ENCODE measurements at regions of chr17 and their contacts with region 1.

Region 1: DNA sequence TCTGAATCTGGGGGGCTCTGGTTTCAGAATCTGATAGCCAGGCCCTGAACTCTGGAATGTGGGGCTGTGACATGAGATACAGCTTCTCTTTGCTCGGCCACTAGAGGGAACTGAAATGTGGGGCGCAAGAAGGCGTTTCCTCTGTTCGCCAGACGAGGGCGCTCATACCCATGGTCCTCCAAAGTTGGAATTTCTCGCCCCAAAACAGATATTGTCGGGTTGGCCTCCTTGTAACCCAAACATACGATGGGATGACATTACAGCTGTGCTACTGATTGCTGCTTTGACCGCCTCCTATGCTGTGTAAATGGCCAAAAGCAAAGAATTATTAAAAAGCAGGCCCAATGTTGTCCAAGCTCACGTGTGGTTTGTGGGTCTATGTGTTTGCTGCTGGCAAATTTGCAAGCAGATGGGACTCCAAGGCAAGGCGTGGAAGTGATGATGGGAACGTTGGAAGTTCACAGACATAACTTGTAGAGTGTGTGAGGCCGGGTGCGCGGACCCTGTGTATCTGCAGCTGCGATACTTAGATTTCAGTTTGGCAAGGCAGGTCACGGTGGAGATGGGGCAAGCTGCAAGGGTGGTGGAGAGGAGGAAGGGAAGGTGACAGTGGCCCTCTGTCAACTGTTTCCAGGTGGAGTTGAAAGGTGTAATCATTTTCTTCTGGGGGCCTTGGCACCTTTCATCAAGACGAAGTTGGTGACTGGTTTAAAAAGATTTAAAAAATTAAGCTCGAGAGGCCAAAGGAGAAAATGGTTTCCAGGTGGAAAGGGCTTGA is 13.0 kb upstream of the MSI2 start:
- DNase-seq: peak; percentile 81 to 89 (median 85)
- H3K4me3 ChIP-seq: no peak overlapping the region
- H3K27ac ChIP-seq: no peak overlapping the region
- H3K4me1 ChIP-seq: peaks cover 3 to 29% (median 26%) of the 10 kb centered on the region in 4 experiments
- H3K27me3 ChIP-seq: no peaks in the 10 kb centered on the region

Region 2: GRCh38 chr17:57178839-57179238 is 64.5 kb before region 1 on chr17:
- CTCF ChIA-PET with region 1: no interaction called
- POLR2A ChIA-PET with region 1: no interaction called
- DNase-seq: no peak
- H3K4me3 ChIP-seq: no peak overlapping the region
- H3K27ac ChIP-seq: no peak overlapping the region
- H3K4me1 ChIP-seq: no peaks in the 10 kb centered on the region
- H3K27me3 ChIP-seq: no peaks in the 10 kb centered on the region

Region 3: GRCh38 chr17:57221366-57222350 is 21.7 kb before region 1 on chr17:
- CTCF ChIA-PET with region 1: no interaction called
- POLR2A ChIA-PET with region 1: no interaction called
- DNase-seq: peak in 2 of 3 donors; percentile 17 to 36
- H3K4me3 ChIP-seq: no peak overlapping the region
- H3K27ac ChIP-seq: no peak overlapping the region
- H3K4me1 ChIP-seq: peaks cover 0 to 4% (median 4%) of the 10 kb centered on the region in 4 experiments
- H3K27me3 ChIP-seq: no peaks in the 10 kb centered on the region

Region 4: GRCh38 chr17:57255776-57256681 is 12.7 kb after region 1 on chr17 and contains the start of gene MSI2:
- CTCF ChIA-PET with region 1: interaction called, 34 read pairs
- POLR2A ChIA-PET with region 1: no interaction called
- DNase-seq: peak; percentile 94 to 97 (median 97)
- H3K4me3 ChIP-seq: peak within 1 kb of the TSS; percentile 74 to 99 (median 91)
- H3K27ac ChIP-seq: peak within 1 kb of the TSS; percentile 72 to 86
- H3K4me1 ChIP-seq: peaks cover 22 to 47% (median 32%) of the 10 kb centered on the region in 4 experiments
- H3K27me3 ChIP-seq: no peaks in the 10 kb centered on the region

Region 5: GRCh38 chr17:57261084-57261461 is 17.7 kb after region 1 on chr17:
- CTCF ChIA-PET with region 1: interaction called, 16 read pairs
- POLR2A ChIA-PET with region 1: no interaction called
- DNase-seq: peak in 2 of 3 donors; percentile 35 to 41
- H3K4me3 ChIP-seq: peak overlapping the region in 6 of 7 experiments; percentile 81 to 99 (median 94)
- H3K27ac ChIP-seq: peak overlapping the region; percentile 9 to 86
- H3K4me1 ChIP-seq: peaks cover 44 to 76% (median 68%) of the 10 kb centered on the region in 4 experiments
- H3K27me3 ChIP-seq: no peaks in the 10 kb centered on the region

Region 6: DNA sequence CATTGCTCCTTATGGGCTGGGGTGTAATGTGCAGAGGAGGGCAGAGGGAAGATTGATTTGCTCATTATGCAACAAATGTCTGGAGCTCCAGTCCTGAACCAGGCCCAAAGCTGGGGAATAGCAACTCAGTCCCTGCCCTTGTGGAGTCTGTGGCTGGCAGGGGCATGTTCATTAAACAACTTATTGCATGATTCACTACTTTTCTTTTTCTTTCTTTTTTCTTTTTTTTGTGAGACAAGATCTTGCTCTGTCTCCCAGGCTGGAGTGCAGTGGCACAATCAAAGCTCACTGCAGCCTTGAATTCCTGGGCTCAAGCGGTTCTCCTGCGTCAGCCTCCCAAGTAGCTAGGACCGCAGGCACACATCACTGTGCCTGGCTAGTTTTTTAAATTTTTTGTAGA is 36.1 kb after region 1 on chr17:
- CTCF ChIA-PET with region 1: interaction called, 12 read pairs
- POLR2A ChIA-PET with region 1: no interaction called
- DNase-seq: no peak
- H3K4me3 ChIP-seq: no peak overlapping the region
- H3K27ac ChIP-seq: peak overlapping the region in 1 of 2 experiments; percentile 37
- H3K4me1 ChIP-seq: peaks cover 3 to 81% (median 68%) of the 10 kb centered on the region in 4 experiments
- H3K27me3 ChIP-seq: no peaks in the 10 kb centered on the region

Region 7: DNA sequence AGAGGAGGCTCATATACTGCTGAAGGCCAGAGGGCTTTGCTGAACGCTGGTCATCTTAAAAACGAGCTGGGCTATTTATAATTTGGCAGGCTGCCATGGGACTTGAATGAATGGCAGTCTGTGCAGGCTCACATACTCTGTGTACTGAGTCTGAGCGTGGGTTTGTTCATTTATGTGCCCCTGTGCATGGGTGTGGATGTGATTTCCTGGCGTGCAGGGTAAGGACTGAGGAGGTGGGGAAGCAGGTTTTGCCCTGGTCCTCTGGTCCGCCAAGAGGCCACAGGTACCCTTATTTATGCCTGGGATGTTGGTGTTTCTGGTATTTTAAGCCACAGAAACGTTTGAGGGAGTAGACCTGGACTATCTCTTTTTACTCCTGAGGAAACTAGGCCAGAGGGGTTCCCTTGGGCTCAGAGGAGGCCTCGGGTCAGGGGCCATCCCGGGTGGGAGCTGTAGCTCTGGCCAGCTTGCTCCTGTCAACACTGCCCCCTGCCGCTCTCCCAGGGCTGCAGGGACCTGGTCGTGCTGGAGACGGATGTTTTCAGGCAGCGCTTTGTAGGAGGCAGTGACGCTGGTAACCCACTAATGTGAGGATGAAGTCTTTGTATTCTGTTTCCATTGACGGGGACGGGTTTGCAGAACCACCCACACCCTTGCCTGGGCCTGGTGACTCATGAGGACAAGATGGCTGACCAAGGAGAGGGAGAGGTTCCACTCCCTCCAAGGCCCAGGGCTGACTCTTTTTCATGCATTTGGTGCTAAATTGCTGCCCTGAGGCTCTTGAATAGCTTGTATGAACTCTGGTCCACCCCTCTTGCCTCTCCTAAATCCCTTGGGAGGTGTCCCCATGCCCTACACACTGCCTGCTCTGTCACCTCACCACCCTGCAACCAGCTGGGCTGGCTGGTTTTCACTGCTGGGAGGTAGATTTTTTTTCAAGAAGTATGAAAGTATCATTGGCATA is 197.4 kb after region 1 on chr17:
- CTCF ChIA-PET with region 1: interaction called, 11 read pairs
- POLR2A ChIA-PET with region 1: no interaction called
- DNase-seq: peak; percentile 87 to 98 (median 96)
- H3K4me3 ChIP-seq: peak overlapping the region in 3 of 7 experiments; percentile 4 to 9 (median 6)
- H3K27ac ChIP-seq: peak overlapping the region; percentile 89 to 93
- H3K4me1 ChIP-seq: peaks cover 31 to 99% (median 98%) of the 10 kb centered on the region in 4 experiments
- H3K27me3 ChIP-seq: no peaks in the 10 kb centered on the region

Region 8: GRCh38 chr17:57515656-57516211 is 272.4 kb after region 1 on chr17:
- CTCF ChIA-PET with region 1: interaction called, 13 read pairs
- POLR2A ChIA-PET with region 1: no interaction called
- DNase-seq: no peak
- H3K4me3 ChIP-seq: no peak overlapping the region
- H3K27ac ChIP-seq: no peak overlapping the region
- H3K4me1 ChIP-seq: peaks cover 6 to 61% (median 31%) of the 10 kb centered on the region in 4 experiments
- H3K27me3 ChIP-seq: no peaks in the 10 kb centered on the region